Activated T-helper 1 cell treated with anti-CD3 and anti-CD28 coated beads, Interleukin-12 subunit alpha, Interleukin-12 subunit beta, Interleukin-2, Interleukin-4 antibody, amounts not matched to agents 30 ng/mL and 10 ng/mL and 1 ng/mL, durations not matched to agents 14 hours and 24 hours and 36 hours (primary cell): ENCODE measurements at regions of chr7 and their contacts with region 1.

Region 1: GRCh38 chr7:120805636-120806388 is 52.1 kb downstream of the TSPAN12 start:
- DNase-seq: peak; percentile 17
- H3K4me3 Mint-ChIP-seq: no peak overlapping the region
- H3K27ac Mint-ChIP-seq: no peak overlapping the region
- H3K4me1 Mint-ChIP-seq: no peaks in the 10 kb centered on the region
- H3K27me3 Mint-ChIP-seq: peaks cover 6% of the 10 kb centered on the region

Region 2: GRCh38 chr7:120857588-120858573 is 52.1 kb after region 1 on chr7 and contains the start of gene TSPAN12:
- intact Hi-C with region 1: loop called (anchors 2 kb)
- DNase-seq: peak; percentile 40
- H3K4me3 Mint-ChIP-seq: peak within 1 kb of the TSS; percentile 73
- H3K27ac Mint-ChIP-seq: no peak within 1 kb of the TSS
- H3K4me1 Mint-ChIP-seq: peaks cover 12% of the 10 kb centered on the region
- H3K27me3 Mint-ChIP-seq: peaks cover 67% of the 10 kb centered on the region
- total RNA-seq, gene TSPAN12: not detected in 2 replicates

Region 3: DNA sequence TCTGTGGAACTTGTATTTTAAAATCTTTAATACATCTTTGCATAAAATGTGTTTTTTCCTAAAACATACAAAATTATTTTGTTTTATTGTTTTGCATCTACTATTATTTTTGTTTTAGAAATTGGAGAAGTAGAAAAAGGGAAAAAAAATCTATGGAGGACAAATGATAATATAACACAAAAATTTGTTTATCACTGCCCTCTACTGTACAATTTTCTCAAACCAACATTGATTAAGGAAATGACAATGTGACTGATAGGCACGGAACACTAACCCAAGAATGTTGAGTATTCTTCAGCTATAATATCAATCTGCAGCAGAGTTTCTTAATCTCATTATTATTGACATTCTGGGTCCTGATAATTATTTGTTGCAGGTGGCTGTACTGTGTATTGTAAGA is 135.3 kb after region 1 on chr7:
- intact Hi-C with region 1: loop called (anchors 1 kb)
- DNase-seq: no peak
- H3K4me3 Mint-ChIP-seq: no peak overlapping the region
- H3K27ac Mint-ChIP-seq: no peak overlapping the region
- H3K4me1 Mint-ChIP-seq: no peaks in the 10 kb centered on the region
- H3K27me3 Mint-ChIP-seq: peaks cover 15% of the 10 kb centered on the region

Region 4: DNA sequence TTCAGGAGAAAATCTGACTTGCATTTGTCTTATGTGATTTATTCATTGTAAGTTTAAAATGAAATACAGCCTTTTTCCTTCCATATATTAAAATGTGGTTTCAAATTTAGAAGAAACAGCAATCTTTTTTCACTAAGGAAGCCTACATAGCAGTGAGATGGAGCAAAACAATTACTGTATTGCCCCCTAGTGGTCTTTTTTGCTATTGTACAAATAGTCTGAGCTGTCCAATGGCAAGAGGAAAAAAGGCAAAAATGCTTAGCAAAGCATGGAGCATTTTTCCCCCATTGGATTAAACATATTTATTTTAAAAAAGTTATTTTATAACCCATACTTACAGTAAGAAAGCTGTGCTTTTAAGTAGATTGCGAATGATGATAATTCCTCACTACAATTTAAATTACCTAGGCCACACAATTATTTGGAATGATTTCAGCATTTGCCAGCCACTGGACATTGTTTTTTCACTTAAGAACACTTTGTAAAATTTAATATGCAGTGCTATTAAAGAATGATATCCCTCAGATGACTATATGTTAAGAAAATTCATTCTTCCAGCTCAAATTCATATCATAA is 302.2 kb after region 1 on chr7:
- intact Hi-C with region 1: loop called (anchors 1 kb)
- DNase-seq: no peak
- H3K4me3 Mint-ChIP-seq: no peak overlapping the region
- H3K27ac Mint-ChIP-seq: no peak overlapping the region
- H3K4me1 Mint-ChIP-seq: no peaks in the 10 kb centered on the region
- H3K27me3 Mint-ChIP-seq: peaks cover 10% of the 10 kb centered on the region